ENCODE measurements at regions of chr4 and their contacts with region 1.

Region 1: DNA sequence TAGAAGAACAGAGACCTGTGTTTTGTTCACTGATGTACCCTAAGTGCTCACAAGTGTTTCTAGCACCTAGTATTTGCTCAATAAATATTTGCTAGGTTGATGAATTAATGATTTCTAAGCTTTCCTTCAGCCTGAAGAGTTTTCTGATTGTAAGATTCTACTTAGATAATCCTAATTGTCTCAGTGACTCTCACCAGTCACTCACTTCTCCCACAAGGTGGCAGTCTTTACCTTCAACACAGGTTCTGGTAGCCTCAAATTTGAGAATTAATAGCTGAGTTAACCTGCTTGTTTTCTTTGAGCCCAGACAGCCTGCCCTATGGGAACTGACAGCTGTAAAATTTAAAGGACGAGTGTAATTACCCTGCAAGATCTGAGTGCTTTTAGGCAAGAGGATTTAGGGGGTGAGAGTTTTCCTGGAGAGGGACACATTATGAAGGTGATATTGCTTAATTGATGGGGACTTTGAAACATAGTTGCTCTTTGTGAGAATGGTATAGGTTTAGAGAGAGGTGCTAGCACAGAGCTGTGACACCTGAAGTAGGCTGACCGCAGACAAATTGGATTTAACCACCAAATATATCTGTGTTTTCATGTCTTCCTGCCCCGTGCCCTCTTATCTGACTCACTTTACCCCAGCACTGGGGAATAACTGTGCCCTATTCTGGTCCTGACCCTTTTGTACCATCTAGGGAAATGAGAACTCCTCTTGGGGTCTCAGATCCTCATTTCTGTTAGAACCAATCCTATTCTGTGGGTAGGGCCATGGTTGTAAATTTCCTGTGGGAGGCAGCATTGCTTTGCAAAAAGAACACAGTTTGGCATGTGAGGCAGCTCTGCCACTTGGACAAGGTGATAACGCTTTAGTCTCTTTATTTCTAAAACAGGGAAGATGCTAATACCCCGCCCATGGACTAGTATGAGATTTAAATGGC is 27.7 kb downstream of the CD38 start:
- DNase-seq: peak; percentile 4
- H3K4me3 ChIP-seq: no peak overlapping the region
- CTCF ChIP-seq: peak; percentile 64

Region 2: GRCh38 chr4:15794905-15795304 is 10.9 kb before region 1 on chr4:
- CTCF ChIA-PET with region 1: interaction called, 22 read pairs
- POLR2A ChIA-PET with region 1: no interaction called
- DNase-seq: no peak
- H3K4me3 ChIP-seq: no peak overlapping the region
- CTCF ChIP-seq: no peak

Region 3: DNA sequence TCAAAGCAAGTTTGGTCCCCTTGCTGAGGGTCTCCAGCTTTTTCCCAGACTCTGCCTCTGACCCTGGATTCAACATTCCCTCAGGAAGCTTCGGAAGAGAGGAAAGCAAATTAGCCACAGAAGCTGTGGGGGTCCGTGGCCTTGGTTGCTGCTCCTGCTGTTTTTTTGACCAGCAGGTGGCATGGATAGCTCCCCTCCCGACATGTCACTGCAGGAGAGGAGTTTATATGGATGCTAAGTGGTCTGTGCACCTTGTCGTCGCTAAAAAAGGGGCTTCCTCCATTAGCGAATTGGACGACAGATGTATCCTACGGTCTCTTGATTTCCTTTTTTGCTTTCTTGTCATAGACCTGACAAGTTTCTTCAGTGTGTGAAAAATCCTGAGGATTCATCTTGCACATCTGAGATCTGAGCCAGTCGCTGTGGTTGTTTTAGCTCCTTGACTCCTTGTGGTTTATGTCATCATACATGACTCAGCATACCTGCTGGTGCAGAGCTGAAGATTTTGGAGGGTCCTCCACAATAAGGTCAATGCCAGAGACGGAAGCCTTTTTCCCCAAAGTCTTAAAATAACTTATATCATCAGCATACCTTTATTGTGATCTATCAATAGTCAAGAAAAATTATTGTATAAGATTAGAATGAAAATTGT is 42.5 kb after region 1 on chr4:
- CTCF ChIA-PET with region 1: interaction called, 15 read pairs
- POLR2A ChIA-PET with region 1: no interaction called
- DNase-seq: no peak
- H3K4me3 ChIP-seq: no peak overlapping the region
- CTCF ChIP-seq: no peak

Region 4: GRCh38 chr4:15963001-15963451 is 157.2 kb after region 1 on chr4 and contains the start of gene FGFBP2:
- CTCF ChIA-PET with region 1: interaction called, 37 read pairs
- POLR2A ChIA-PET with region 1: no interaction called
- DNase-seq: peak; percentile 5
- H3K4me3 ChIP-seq: no peak within 1 kb of the TSS
- CTCF ChIP-seq: peak; percentile 79

Region 5: GRCh38 chr4:16006791-16007446 is 201.1 kb after region 1 on chr4:
- CTCF ChIA-PET with region 1: interaction called, 89 read pairs
- POLR2A ChIA-PET with region 1: no interaction called
- DNase-seq: peak; percentile 24
- H3K4me3 ChIP-seq: no peak overlapping the region
- CTCF ChIP-seq: no peak

Region 6: DNA sequence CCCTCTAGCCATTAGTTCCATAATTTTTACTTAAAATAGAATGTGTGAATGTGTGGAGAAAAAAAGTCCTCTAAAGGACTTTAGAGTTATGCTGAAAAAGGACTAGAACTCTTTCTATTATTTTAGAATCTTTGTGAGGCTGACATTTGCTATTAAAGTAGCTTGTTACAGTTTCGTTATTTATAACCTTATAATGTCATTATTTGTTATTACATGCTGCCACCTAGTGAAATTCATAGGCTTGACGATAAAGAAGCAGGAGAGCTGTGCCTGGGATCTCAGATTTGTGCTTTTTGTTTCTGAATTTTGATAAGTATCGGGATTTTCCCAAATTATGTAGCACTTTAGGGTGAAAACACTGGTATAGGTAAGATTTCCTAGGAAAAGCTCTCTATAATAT is 458.9 kb after region 1 on chr4:
- CTCF ChIA-PET with region 1: interaction called, 22 read pairs
- POLR2A ChIA-PET with region 1: no interaction called
- DNase-seq: no peak
- H3K4me3 ChIP-seq: no peak overlapping the region
- CTCF ChIP-seq: peak; percentile 32

Measured in AG04449 (cell line).